Activated CD8-positive, alpha-beta T cell treated with anti-CD3 and anti-CD28 coated beads, Interleukin-2, amount 10 ng/mL, durations not matched to agents 7 days and 5 days (primary cell): ENCODE measurements at regions of chr10 and their contacts with region 1.

Region 1: GRCh38 chr10:128150045-128150493 is 23.8 kb upstream of the MKI67 start:
- DNase-seq: peak; percentile 83
- ATAC-seq: peak; percentile 98
- H3K4me3 Mint-ChIP-seq: peak overlapping the region; percentile 71
- H3K27ac Mint-ChIP-seq: no peak overlapping the region
- H3K4me1 Mint-ChIP-seq: peaks cover 23% of the 10 kb centered on the region
- H3K27me3 Mint-ChIP-seq: peaks cover 2% of the 10 kb centered on the region

Region 2: DNA sequence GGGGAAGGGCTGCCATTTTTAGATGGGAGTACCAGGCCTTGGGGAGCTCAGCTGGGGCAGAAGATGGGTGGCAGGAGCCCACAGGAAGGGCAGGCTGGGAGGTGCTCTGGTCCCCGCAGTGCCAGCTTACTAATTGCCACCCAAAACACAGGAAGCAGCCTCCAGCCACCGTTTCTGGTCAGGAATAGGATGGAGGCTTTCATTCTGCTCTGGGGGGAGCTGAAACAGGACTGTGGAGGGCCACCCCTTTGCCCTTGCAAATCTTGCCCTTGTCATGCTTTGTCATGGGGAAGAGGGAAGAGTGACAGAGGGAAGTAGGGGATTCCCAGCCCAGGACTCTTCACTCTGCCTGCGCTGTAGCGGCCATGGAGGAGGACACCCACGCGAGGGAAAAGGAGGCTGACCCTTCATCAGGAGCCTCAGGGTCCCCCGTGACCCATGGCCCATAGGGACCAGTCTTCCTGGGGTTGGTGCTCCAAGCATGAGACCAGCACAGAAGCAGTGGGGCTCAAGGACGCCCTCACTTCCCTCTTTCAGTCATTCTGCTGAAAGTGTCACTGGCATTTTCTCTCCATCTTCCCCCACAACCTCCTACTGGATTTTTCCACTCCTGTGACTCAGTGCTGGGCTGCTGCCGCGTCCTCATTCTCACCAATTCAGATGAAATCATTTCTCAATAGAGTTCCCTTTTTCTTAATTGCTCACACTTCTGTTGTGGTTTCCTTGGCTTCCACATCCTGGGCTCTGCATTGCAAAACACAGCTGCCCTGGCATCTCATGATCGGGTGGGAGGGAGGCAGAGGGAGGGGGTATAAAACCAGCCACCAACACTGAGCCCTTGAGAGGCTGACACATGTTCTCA is 85.7 kb before region 1 on chr10:
- CTCF ChIA-PET with region 1: interaction called, 12 read pairs
- POLR2A ChIA-PET with region 1: no interaction called
- DNase-seq: peak; percentile 81
- ATAC-seq: peak; percentile 54
- H3K4me3 Mint-ChIP-seq: peak overlapping the region; percentile 78
- H3K27ac Mint-ChIP-seq: peak overlapping the region; percentile 85
- H3K4me1 Mint-ChIP-seq: peaks cover 78% of the 10 kb centered on the region
- H3K27me3 Mint-ChIP-seq: no peaks in the 10 kb centered on the region

Region 3: GRCh38 chr10:128161031-128161430 is 11.0 kb after region 1 on chr10:
- CTCF ChIA-PET with region 1: interaction called, 11 read pairs
- POLR2A ChIA-PET with region 1: no interaction called
- DNase-seq: no peak
- ATAC-seq: no peak
- H3K4me3 Mint-ChIP-seq: no peak overlapping the region
- H3K27ac Mint-ChIP-seq: peak overlapping the region; percentile 4
- H3K4me1 Mint-ChIP-seq: peaks cover 26% of the 10 kb centered on the region
- H3K27me3 Mint-ChIP-seq: peaks cover 15% of the 10 kb centered on the region